ENCODE measurements at regions of chr15 and their contacts with region 1.

Region 1: GRCh38 chr15:67120839-67121643 is 55.6 kb downstream of the SMAD3 start:
- DNase-seq: peak; percentile 61 to 88 (median 76)
- ATAC-seq: peak; percentile 92 to 93
- H3K4me3 Mint-ChIP-seq: peak overlapping the region; percentile 73 to 94 (median 84)
- H3K27ac Mint-ChIP-seq: peak overlapping the region; percentile 83 to 97 (median 96)
- H3K4me1 Mint-ChIP-seq: peaks cover 32 to 93% (median 66%) of the 10 kb centered on the region in 4 donors
- H3K27me3 Mint-ChIP-seq: no peaks in the 10 kb centered on the region

Region 2: GRCh38 chr15:67065444-67066093 is 55.5 kb before region 1 on chr15 and contains the start of gene SMAD3:
- POLR2A ChIA-PET with region 1: interaction called, 10 read pairs
- DNase-seq: peak; percentile 36 to 79 (median 52)
- ATAC-seq: peak; percentile 49 to 66
- H3K4me3 Mint-ChIP-seq: peak within 1 kb of the TSS; percentile 85 to 97 (median 91)
- H3K27ac Mint-ChIP-seq: peak within 1 kb of the TSS in 8 of 10 donors; percentile 32 to 91 (median 82)
- H3K4me1 Mint-ChIP-seq: peaks cover 32 to 61% (median 48%) of the 10 kb centered on the region in 4 donors
- H3K27me3 Mint-ChIP-seq: no peaks in the 10 kb centered on the region
- polyA plus RNA-seq, gene SMAD3: 0.57 to 4.2 (median 1.7) TPM

Region 3: GRCh38 chr15:67134067-67134838 is 13.2 kb after region 1 on chr15:
- POLR2A ChIA-PET with region 1: interaction called, 10 read pairs
- DNase-seq: peak in 9 of 10 donors; percentile 48 to 84 (median 74)
- ATAC-seq: peak; percentile 98
- H3K4me3 Mint-ChIP-seq: peak overlapping the region; percentile 77 to 92 (median 86)
- H3K27ac Mint-ChIP-seq: peak overlapping the region; percentile 97 to 99 (median 99)
- H3K4me1 Mint-ChIP-seq: peaks cover 18 to 95% (median 63%) of the 10 kb centered on the region in 4 donors
- H3K27me3 Mint-ChIP-seq: no peaks in the 10 kb centered on the region

Region 4: DNA sequence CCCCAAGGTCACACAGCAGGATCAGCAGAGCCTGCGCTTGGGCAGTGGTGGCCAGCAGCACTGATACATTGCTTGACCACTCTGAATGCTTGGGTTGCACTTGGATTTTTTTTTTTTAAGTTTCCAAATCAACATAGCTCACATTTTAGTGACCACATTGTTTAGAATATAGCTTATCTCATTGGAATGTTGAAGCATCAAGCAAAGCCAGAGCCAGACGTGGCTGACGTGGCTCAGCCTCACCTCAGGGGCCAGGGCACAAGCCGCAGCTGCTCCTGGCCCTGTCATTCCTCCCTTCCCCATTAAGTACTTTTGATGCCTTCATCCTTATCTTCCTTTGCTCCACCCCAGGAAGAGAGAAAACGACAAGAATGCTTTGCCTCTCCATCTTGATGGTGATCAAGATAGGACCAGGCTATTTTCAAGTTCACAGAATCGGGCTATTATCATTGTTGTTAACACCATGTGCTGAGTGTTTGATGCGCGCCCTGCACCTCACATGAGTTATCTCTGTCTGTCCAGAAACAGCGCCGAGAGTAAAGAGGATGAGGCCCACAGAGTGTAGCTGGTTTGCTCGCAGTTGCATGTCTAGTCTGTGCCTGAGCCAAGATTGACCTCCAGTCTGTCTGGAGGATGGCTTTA is 57.6 kb after region 1 on chr15:
- POLR2A ChIA-PET with region 1: no interaction called
- DNase-seq: no peak
- ATAC-seq: no peak
- H3K4me3 Mint-ChIP-seq: no peak overlapping the region
- H3K27ac Mint-ChIP-seq: peak overlapping the region in 1 of 10 donors; percentile 1
- H3K4me1 Mint-ChIP-seq: peaks cover 5 to 28% (median 16%) of the 10 kb centered on the region in 4 donors
- H3K27me3 Mint-ChIP-seq: no peaks in the 10 kb centered on the region

Region 5: DNA sequence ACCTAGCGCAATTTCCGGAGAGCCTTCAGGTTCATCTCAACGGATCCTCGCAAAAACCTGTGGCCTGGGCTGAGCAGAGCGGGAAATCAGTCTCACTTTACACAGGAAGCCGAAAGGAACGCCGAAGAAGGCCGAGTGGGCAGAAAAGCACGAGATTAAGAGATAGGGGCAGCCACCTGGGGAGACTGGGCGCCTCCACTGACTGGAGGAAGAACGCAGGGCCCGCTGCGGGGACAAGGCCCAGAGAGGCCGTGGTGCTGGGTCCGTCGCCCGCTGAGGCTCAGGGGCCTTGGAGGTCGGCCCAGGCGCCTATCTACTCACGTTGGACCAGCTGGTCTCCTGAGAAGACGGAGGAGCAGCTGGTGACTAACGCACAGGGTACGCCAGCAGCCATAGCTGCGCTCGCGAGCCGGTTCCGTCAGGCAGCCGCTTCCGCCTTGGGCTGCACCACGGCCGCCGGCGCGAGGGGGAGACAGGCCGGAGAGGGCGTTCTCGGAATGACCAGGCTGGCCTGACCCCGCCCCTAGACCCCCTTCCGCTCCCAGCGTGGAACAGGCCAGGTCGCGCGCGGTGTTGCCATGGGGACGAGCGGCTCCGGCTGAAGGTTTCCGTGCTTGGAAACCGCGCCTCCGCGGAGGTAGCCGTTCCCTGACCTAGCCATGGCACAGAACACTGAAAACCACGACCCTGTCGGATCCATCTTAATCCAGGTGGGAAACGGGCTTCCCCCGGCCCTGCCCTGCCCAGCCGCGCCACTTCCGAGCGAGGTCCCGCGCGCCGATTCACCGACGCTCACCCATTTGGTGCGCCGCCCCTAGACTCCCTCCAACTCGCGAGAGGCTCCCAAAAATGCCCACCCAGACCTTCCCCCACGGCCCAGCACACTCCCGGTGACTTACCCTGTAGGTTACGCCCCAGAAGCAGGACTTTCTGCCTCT is 133.5 kb after region 1 on chr15 and contains the starts of genes AAGAB and IQCH:
- POLR2A ChIA-PET with region 1: no interaction called
- DNase-seq: peak; percentile 87 to 98 (median 95)
- ATAC-seq: peak; percentile 91 to 93
- H3K4me3 Mint-ChIP-seq: peak within 1 kb of the TSS; percentile 92 to 99 (median 98)
- H3K27ac Mint-ChIP-seq: peak within 1 kb of the TSS; percentile 92 to 97 (median 95)
- H3K4me1 Mint-ChIP-seq: peaks cover 17 to 45% (median 43%) of the 10 kb centered on the region in 4 donors
- H3K27me3 Mint-ChIP-seq: no peaks in the 10 kb centered on the region
- polyA plus RNA-seq, gene AAGAB: 43.8 to 49.4 (median 44.3) TPM
- polyA plus RNA-seq, gene IQCH: 0.20 to 0.28 TPM in 2 of 3 donors, not detected in the other